ENCODE measurements at regions of chr5 and their contacts with region 1.

Region 1: GRCh38 chr5:126339215-126339805 is 83.9 kb upstream of the GRAMD2B start:
- DNase-seq: no peak
- H3K4me3 ChIP-seq: no peak overlapping the region
- H3K27ac ChIP-seq: no peak overlapping the region
- H3K4me1 ChIP-seq: peaks cover 0 to 7% of the 10 kb centered on the region in 2 donors
- H3K27me3 ChIP-seq: no peaks in the 10 kb centered on the region
- CTCF ChIP-seq: peak; percentile 57 to 83 (median 66)

Region 2: DNA sequence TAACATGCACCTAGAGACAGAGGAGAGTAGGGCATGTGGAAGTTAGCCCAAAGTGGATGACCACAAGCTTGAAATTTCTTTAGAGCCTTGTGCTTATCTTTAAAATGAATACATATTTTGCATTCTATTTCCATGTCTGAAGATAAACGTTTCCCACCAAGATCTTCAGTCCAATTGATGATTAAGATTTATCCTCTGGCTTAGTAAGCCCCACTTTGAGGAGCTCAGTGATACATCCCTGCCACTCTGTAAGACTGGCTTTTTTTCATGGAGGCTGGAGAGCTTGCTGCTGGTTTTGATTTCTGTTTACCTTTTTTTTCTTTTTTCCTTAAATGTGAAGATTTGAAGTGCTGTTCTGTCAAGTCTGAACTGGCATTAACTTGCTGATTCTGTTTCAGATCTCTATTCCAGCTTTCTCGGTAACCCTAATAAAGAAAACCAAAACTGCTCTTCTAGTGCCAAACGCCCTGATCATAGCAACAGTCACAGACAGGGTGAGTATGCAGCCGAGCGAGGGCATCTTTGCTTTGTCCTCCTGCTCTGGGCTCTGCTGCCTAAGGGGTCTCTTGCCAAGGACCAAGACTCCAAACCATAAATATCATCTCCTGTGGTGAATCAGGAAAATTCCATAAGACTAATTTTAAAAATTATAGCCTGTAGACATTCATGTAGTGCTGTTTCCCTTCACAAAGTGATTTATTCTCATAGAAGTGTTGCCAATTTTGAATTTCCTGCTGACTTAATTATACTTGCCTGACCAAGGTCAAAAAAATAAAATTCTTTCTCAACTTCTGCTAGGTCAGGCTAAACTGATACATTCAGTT is 138.2 kb after region 1 on chr5:
- intact Hi-C with region 1: no loop called
- DNase-seq: no peak
- H3K4me3 ChIP-seq: peak overlapping the region; percentile 9 to 19
- H3K27ac ChIP-seq: peak overlapping the region; percentile 75 to 77
- H3K4me1 ChIP-seq: peaks cover 10 to 21% of the 10 kb centered on the region in 2 donors
- H3K27me3 ChIP-seq: no peaks in the 10 kb centered on the region
- CTCF ChIP-seq: no peak

Region 3: DNA sequence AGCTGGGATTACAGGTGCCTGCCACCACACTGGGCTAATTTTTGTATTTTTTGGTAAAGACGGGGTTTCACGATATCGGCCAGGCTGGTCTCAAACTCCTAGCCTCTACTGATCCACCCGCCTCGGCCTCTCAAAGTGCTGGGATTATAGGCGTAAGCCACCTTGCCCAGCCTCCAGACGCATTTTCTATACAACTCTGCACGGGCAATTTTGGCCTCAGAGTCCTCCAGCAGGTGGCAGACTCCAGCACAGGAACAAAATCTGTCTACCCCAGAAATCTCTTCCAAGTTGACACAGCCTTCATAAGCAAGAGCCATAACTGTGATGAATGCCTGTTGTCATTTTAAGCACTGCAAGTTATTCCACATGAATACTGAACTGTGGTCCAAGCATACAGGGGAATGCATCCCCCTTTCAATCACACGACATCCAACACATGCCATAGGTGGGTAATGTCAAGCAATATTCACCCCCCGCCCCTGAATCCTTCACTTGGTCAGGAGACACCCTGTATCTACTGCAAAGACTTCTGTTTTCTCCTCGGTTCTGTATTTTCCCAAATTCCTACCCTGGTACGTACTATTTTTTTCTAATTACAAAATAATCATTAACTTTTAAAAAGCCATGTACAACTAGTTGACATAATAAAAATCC is 204.9 kb after region 1 on chr5:
- intact Hi-C with region 1: loop called (anchors 1 kb)
- DNase-seq: no peak
- H3K4me3 ChIP-seq: no peak overlapping the region
- H3K27ac ChIP-seq: no peak overlapping the region
- H3K4me1 ChIP-seq: no peaks in the 10 kb centered on the region
- H3K27me3 ChIP-seq: no peaks in the 10 kb centered on the region
- CTCF ChIP-seq: no peak

Region 4: GRCh38 chr5:126600631-126601511 is 261.6 kb after region 1 on chr5 and contains the start of gene PHAX:
- intact Hi-C with region 1: loop called (anchors 2 kb)
- DNase-seq: peak; percentile 18 to 85
- H3K4me3 ChIP-seq: peak within 1 kb of the TSS; percentile 76 to 87
- H3K27ac ChIP-seq: peak within 1 kb of the TSS; percentile 75 to 80
- H3K4me1 ChIP-seq: peaks cover 0 to 12% of the 10 kb centered on the region in 2 donors
- H3K27me3 ChIP-seq: no peaks in the 10 kb centered on the region
- CTCF ChIP-seq: peak; percentile 46 to 82 (median 74)
- total RNA-seq, gene PHAX: 19.3 TPM

Measured in ascending aorta (tissue), 2 donors.